Motor neuron (in vitro differentiated cells): ENCODE measurements at regions of chr21 and their contacts with region 1.

Region 1: GRCh38 chr21:42164064-42164789 is 54.7 kb upstream of the ABCG1 start:
- ATAC-seq: peak in 7 of 8 experiments; percentile 39 to 71 (median 54)
- H3K4me3 ChIP-seq: no peak overlapping the region
- H3K27ac ChIP-seq: no peak overlapping the region
- H3K4me1 ChIP-seq: peaks cover 7 to 12% of the 10 kb centered on the region in 2 donors

Region 2: DNA sequence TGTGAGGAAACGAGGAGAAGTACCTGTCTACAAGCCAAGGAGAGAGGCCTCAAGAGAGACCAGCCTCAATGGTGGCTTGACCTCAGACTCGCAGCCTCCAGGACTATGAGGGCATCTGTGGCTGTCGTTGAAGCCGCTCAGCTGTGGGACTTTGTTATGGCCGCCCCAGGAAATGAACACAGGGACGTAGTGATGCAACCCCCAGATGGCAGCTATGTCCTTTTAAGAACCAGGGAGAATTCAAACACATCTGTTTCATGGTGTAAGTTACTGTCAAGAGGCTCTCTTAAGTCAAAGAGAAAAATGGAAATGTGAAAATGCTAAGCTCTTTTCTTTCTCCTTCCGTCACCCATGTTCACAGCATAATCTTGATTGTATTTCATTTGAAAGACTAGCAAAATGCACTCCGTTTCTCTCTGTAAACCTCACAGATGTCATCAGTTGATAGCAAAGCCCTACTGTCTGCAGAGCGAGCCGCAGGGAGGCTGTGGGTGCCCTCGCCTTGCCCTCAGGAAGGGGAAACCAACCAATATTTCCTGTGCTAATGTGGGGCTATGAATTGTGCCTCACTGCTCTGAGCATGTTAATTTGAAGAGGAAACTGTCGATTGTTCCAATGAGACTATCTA is 260.8 kb after region 1 on chr21:
- in situ Hi-C with region 1: loop called in 1 of 9 experiments (anchors 25 kb)
- ATAC-seq: no peak
- H3K4me3 ChIP-seq: no peak overlapping the region
- H3K27ac ChIP-seq: no peak overlapping the region
- H3K4me1 ChIP-seq: peaks cover 0 to 7% of the 10 kb centered on the region in 2 donors